ENCODE measurements at regions of chr3 and their contacts with region 1.

Region 1: GRCh38 chr3:112642912-112643506 is 2.1 kb upstream of the CCDC80 start:
- DNase-seq: peak; percentile 74 to 79 (median 78)
- H3K4me3 ChIP-seq: peak overlapping the region in 1 of 2 donors; percentile 1
- H3K4me3 Mint-ChIP-seq: peak overlapping the region; percentile 67 to 86 (median 81)
- H3K27ac ChIP-seq: no peak overlapping the region
- H3K27ac Mint-ChIP-seq: peak overlapping the region; percentile 0 to 53 (median 15)
- H3K4me1 ChIP-seq: peaks cover 14% of the 10 kb centered on the region
- H3K4me1 Mint-ChIP-seq: peaks cover 11 to 18% (median 14%) of the 10 kb centered on the region in 4 donors
- H3K27me3 ChIP-seq: no peaks in the 10 kb centered on the region
- H3K27me3 Mint-ChIP-seq: peaks cover 5% of the 10 kb centered on the region in 2 donors

Region 2: GRCh38 chr3:112482675-112483074 is 160.3 kb before region 1 on chr3:
- CTCF ChIA-PET with region 1: no interaction called
- POLR2A ChIA-PET with region 1: no interaction called
- intact Hi-C with region 1: no loop called
- DNase-seq: no peak
- H3K4me3 ChIP-seq: no peak overlapping the region
- H3K4me3 Mint-ChIP-seq: peak overlapping the region in 7 of 8 donors; percentile 39 to 86 (median 63)
- H3K27ac ChIP-seq: no peak overlapping the region
- H3K27ac Mint-ChIP-seq: peak overlapping the region; percentile 33 to 90 (median 74)
- H3K4me1 ChIP-seq: peaks cover 46% of the 10 kb centered on the region
- H3K4me1 Mint-ChIP-seq: peaks cover 37 to 65% (median 53%) of the 10 kb centered on the region in 4 donors
- H3K27me3 ChIP-seq: no peaks in the 10 kb centered on the region
- H3K27me3 Mint-ChIP-seq: no peaks in the 10 kb centered on the region

Region 3: DNA sequence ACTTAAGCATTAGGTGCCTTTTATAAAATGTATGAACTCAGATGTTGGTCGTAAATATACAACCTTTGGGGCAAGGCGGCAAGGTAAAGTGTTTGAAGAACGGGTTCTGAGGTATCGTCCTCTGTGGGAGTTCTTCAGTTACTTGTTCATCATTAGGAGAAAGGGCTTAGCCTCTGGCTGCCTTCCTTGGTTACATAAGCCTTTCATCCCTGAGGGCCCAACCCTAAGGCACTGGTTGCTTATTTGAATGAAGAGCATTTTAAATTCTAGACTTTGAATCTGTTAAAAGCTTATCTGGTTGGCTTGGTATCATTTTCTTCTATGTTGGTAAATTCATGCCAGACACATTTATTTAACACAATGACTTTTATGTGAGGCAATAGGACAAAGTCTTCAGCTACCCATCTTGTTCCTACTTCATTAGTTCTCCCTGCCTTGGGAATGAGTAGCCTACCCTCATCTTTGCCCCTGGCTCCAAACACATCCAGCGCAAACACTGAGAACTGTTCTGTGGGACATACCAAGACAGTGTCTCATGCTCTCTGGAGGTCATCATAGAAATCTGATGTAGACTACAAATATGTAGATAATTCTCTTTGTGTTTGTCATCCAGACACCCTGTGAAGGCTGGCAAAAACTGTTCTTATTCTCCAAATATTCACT is 10.3 kb after region 1 on chr3:
- CTCF ChIA-PET with region 1: interaction called, 27 read pairs
- POLR2A ChIA-PET with region 1: interaction called, 3 read pairs
- intact Hi-C with region 1: no loop called
- DNase-seq: no peak
- H3K4me3 ChIP-seq: no peak overlapping the region
- H3K4me3 Mint-ChIP-seq: no peak overlapping the region
- H3K27ac ChIP-seq: no peak overlapping the region
- H3K27ac Mint-ChIP-seq: no peak overlapping the region
- H3K4me1 ChIP-seq: no peaks in the 10 kb centered on the region
- H3K4me1 Mint-ChIP-seq: peaks cover 5 to 10% (median 6%) of the 10 kb centered on the region in 4 donors
- H3K27me3 ChIP-seq: no peaks in the 10 kb centered on the region
- H3K27me3 Mint-ChIP-seq: no peaks in the 10 kb centered on the region

Region 4: GRCh38 chr3:112973325-112974177 is 330.5 kb after region 1 on chr3:
- CTCF ChIA-PET with region 1: interaction called, 84 read pairs
- POLR2A ChIA-PET with region 1: interaction called, 8 read pairs
- intact Hi-C with region 1: no loop called
- DNase-seq: peak; percentile 47 to 69 (median 52)
- H3K4me3 ChIP-seq: peak overlapping the region; percentile 64 to 66
- H3K4me3 Mint-ChIP-seq: peak overlapping the region; percentile 88 to 98 (median 94)
- H3K27ac ChIP-seq: peak overlapping the region; percentile 65
- H3K27ac Mint-ChIP-seq: peak overlapping the region; percentile 88 to 98 (median 93)
- H3K4me1 ChIP-seq: peaks cover 65% of the 10 kb centered on the region
- H3K4me1 Mint-ChIP-seq: peaks cover 60 to 95% (median 71%) of the 10 kb centered on the region in 4 donors
- H3K27me3 ChIP-seq: no peaks in the 10 kb centered on the region
- H3K27me3 Mint-ChIP-seq: no peaks in the 10 kb centered on the region

Region 5: GRCh38 chr3:112984485-112984884 is 341.5 kb after region 1 on chr3:
- CTCF ChIA-PET with region 1: interaction called, 84 read pairs
- POLR2A ChIA-PET with region 1: interaction called, 8 read pairs
- intact Hi-C with region 1: loop called (anchors 1 kb)
- DNase-seq: peak; percentile 47 to 84 (median 54)
- H3K4me3 ChIP-seq: no peak overlapping the region
- H3K4me3 Mint-ChIP-seq: peak overlapping the region in 4 of 8 donors; percentile 7 to 45 (median 32)
- H3K27ac ChIP-seq: peak overlapping the region; percentile 1
- H3K27ac Mint-ChIP-seq: peak overlapping the region; percentile 53 to 95 (median 77)
- H3K4me1 ChIP-seq: peaks cover 39% of the 10 kb centered on the region
- H3K4me1 Mint-ChIP-seq: peaks cover 37 to 65% (median 51%) of the 10 kb centered on the region in 4 donors
- H3K27me3 ChIP-seq: no peaks in the 10 kb centered on the region
- H3K27me3 Mint-ChIP-seq: no peaks in the 10 kb centered on the region

Region 6: GRCh38 chr3:113035387-113035982 is 392.5 kb after region 1 on chr3:
- CTCF ChIA-PET with region 1: interaction called, 37 read pairs
- POLR2A ChIA-PET with region 1: interaction called, 4 read pairs
- intact Hi-C with region 1: loop called (anchors 5 kb)
- DNase-seq: peak; percentile 34 to 58 (median 49)
- H3K4me3 ChIP-seq: no peak overlapping the region
- H3K4me3 Mint-ChIP-seq: no peak overlapping the region
- H3K27ac ChIP-seq: no peak overlapping the region
- H3K27ac Mint-ChIP-seq: no peak overlapping the region
- H3K4me1 ChIP-seq: no peaks in the 10 kb centered on the region
- H3K4me1 Mint-ChIP-seq: peaks cover 0 to 5% (median 1%) of the 10 kb centered on the region in 4 donors
- H3K27me3 ChIP-seq: no peaks in the 10 kb centered on the region
- H3K27me3 Mint-ChIP-seq: no peaks in the 10 kb centered on the region

Region 7: DNA sequence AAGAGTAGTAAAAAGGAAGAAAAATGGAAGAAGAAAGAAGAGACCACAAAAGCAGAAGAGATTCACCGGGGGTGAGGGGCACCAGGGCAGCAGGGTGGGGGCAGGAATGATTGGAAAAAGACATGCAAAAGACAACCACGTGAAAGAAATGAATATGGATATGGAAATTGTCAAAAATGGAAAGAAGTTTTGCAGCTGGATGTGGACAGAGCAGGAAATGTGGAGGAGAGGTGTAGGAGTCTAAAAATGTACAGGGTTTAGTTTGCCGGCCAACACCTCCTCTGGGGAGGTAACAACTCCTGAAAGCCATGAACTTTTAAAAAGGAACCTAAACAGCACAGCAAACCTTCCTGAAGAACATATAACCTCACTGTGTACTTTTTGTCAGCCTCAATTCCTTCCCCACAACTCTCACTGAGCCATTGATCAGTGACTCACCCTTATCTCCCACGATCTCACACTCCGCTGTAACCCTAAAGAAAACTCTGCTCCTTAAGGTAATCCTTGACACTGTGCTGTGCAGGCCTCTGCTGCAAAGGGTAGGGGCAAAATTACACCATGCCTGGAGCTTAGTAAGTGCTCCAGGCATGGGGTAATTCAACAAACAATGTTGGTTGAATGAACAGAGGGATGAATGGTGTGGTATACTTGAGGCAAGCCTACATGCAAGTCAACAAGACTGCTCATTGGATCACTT is 468.1 kb after region 1 on chr3:
- CTCF ChIA-PET with region 1: no interaction called
- POLR2A ChIA-PET with region 1: no interaction called
- intact Hi-C with region 1: no loop called
- DNase-seq: peak in 3 of 5 donors; percentile 5 to 50 (median 7)
- H3K4me3 ChIP-seq: no peak overlapping the region
- H3K4me3 Mint-ChIP-seq: peak overlapping the region in 1 of 8 donors; percentile 2
- H3K27ac ChIP-seq: no peak overlapping the region
- H3K27ac Mint-ChIP-seq: peak overlapping the region in 2 of 7 donors; percentile 55 to 59
- H3K4me1 ChIP-seq: peaks cover 8% of the 10 kb centered on the region
- H3K4me1 Mint-ChIP-seq: peaks cover 6 to 18% (median 12%) of the 10 kb centered on the region in 4 donors
- H3K27me3 ChIP-seq: no peaks in the 10 kb centered on the region
- H3K27me3 Mint-ChIP-seq: no peaks in the 10 kb centered on the region

Region 8: DNA sequence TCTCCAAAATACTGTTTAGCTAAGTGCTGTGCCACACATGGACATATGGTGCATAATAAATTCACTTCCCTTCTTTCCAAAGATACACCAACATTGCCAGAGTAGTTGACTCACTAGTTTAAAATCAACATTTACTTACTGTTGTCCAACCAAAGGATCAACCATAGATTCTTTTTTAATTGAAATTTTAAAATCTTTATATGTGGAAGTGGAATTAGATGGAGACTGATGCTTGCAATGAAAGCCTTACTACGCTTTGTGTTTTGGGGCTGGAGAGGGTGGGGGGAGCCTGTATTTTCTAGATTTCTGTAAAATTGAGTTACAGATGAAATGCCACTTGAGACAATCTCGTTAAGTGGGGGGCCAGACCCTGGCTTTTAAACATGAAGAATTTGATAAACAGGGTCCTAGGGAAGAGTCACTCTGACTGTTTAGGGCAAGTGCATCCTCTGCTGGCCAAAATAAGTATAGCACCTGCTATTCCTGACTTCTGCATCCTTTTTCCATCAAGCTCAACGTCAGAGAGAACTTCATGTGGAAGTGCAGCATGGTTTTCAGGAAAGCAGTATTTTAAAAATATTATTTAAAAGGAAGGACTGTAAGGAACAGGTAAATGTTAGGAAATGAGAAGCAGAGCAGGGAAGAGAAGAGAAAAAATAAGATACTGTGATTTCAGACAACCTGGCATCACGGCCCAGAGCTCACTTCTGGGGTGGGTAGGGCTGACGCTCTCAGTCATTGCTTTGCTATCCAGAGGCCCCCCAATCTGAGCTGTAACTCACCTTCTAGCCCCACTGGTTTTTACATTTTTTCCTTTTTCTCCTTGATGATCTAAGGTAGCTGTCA is 645.0 kb after region 1 on chr3:
- CTCF ChIA-PET with region 1: interaction called, 58 read pairs
- POLR2A ChIA-PET with region 1: no interaction called
- intact Hi-C with region 1: no loop called
- DNase-seq: peak in 4 of 5 donors; percentile 25 to 49 (median 36)
- H3K4me3 ChIP-seq: no peak overlapping the region
- H3K4me3 Mint-ChIP-seq: no peak overlapping the region
- H3K27ac ChIP-seq: no peak overlapping the region
- H3K27ac Mint-ChIP-seq: no peak overlapping the region
- H3K4me1 ChIP-seq: no peaks in the 10 kb centered on the region
- H3K4me1 Mint-ChIP-seq: no peaks in the 10 kb centered on the region
- H3K27me3 ChIP-seq: no peaks in the 10 kb centered on the region
- H3K27me3 Mint-ChIP-seq: no peaks in the 10 kb centered on the region